Heart left ventricle (tissue), 16 donors: ENCODE measurements at regions of chr16 and their contacts with region 1.

Region 1: GRCh38 chr16:19563377-19563776 is 7.9 kb downstream of the VPS35L start:
- DNase-seq: no peak
- ATAC-seq: no peak
- H3K4me3 ChIP-seq: no peak overlapping the region
- H3K27ac ChIP-seq: no peak overlapping the region
- H3K4me1 ChIP-seq: no peaks in the 10 kb centered on the region
- H3K27me3 ChIP-seq: no peaks in the 10 kb centered on the region
- CTCF ChIP-seq: no peak
- POLR2A ChIP-seq: no peak

Region 2: DNA sequence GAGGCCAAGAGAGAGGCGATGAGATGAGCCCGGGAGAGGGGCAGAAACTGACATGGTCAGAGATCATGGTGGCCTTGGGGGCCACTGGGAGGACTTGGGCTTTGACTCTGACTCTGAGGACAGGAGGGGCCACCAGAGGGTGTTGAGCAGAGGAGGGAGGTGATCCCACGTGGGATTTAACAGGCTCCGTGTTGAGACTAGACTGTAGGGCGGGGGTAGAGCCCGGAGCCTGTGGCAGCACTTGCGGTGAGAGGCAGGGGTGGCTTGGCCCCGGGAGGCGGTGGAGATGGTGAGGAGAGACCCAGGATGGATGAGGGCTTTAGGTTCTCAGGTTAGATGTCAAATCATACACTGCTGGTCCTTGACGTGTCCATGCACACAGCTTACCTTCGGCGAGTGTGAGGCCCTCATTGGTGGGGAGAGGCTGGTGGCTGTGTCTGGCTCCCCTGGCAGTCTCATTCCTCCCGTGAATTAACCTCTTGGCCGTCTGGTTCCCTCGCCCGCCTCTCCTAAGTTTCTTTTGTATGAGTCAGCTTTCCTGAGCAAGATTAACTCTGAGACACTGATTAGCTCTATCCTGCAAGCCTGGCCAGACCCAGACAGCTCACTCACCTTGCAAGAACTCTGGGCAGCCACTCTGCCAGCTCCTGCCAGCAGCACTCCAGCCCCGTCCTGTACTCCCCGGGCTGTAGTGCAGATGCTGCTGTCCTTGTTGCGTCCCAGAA is 31.8 kb after region 1 on chr16:
- intact Hi-C with region 1: loop called in 1 of 10 experiments (anchors 5 kb)
- DNase-seq: peak; percentile 26 to 84 (median 71)
- ATAC-seq: peak; percentile 74 to 98 (median 92)
- H3K4me3 ChIP-seq: no peak overlapping the region
- H3K27ac ChIP-seq: peak overlapping the region in 5 of 12 donors; percentile 6 to 64 (median 17)
- H3K4me1 ChIP-seq: peaks cover 0 to 7% (median 0%) of the 10 kb centered on the region in 12 donors
- H3K27me3 ChIP-seq: no peaks in the 10 kb centered on the region
- CTCF ChIP-seq: no peak
- POLR2A ChIP-seq: no peak